AG04449 (cell line): ENCODE measurements at regions of chr19 and their contacts with region 1.

Region 1: GRCh38 chr19:18000935-18001778 is 6.8 kb upstream of the ARRDC2 start:
- DNase-seq: no peak
- H3K4me3 ChIP-seq: peak overlapping the region; percentile 69
- CTCF ChIP-seq: no peak

Region 2: DNA sequence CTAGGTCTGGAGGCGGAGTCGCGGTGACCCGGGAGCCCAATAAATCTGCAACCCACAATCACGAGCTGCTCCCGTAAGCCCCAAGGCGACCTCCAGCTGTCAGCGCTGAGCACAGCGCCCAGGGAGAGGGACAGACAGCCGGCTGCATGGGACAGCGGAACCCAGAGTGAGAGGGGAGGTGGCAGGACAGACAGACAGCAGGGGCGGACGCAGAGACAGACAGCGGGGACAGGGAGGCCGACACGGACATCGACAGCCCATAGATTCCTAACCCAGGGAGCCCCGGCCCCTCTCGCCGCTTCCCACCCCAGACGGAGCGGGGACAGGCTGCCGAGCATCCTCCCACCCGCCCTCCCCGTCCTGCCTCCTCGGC is 129.3 kb before region 1 on chr19 and contains the start of gene SLC5A5:
- CTCF ChIA-PET with region 1: interaction called, 74 read pairs
- POLR2A ChIA-PET with region 1: no interaction called
- DNase-seq: no peak
- H3K4me3 ChIP-seq: no peak within 1 kb of the TSS
- CTCF ChIP-seq: no peak

Region 3: GRCh38 chr19:17883627-17884410 is 117.3 kb before region 1 on chr19:
- CTCF ChIA-PET with region 1: no interaction called
- POLR2A ChIA-PET with region 1: no interaction called
- DNase-seq: no peak
- H3K4me3 ChIP-seq: no peak overlapping the region
- CTCF ChIP-seq: no peak

Region 4: GRCh38 chr19:17981611-17982010 is 19.5 kb before region 1 on chr19:
- CTCF ChIA-PET with region 1: interaction called, 16 read pairs
- POLR2A ChIA-PET with region 1: no interaction called
- DNase-seq: no peak
- H3K4me3 ChIP-seq: no peak overlapping the region
- CTCF ChIP-seq: no peak

Region 5: DNA sequence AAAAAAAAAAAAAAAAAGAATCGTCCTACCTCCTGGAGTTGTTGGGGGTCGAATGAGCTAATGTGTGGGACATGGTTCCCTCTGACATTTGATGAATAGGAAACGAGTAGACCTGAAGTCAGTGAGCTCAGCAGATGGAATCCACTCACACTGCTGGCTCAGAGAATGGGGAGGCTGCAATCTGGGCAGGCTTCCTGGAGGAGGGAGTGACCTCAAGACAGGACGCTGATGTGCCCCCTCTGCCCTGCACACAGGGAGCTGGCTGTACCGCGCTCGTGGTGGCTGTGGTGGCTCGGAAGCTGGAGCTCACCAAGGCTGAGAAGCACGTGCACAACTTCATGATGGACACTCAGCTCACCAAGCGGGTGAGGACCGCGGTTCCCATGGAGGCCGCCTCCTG is 13.0 kb before region 1 on chr19:
- CTCF ChIA-PET with region 1: interaction called, 16 read pairs
- POLR2A ChIA-PET with region 1: no interaction called
- DNase-seq: no peak
- H3K4me3 ChIP-seq: no peak overlapping the region
- CTCF ChIP-seq: no peak